ENCODE measurements at regions of chrX and their contacts with region 1.

Region 1: DNA sequence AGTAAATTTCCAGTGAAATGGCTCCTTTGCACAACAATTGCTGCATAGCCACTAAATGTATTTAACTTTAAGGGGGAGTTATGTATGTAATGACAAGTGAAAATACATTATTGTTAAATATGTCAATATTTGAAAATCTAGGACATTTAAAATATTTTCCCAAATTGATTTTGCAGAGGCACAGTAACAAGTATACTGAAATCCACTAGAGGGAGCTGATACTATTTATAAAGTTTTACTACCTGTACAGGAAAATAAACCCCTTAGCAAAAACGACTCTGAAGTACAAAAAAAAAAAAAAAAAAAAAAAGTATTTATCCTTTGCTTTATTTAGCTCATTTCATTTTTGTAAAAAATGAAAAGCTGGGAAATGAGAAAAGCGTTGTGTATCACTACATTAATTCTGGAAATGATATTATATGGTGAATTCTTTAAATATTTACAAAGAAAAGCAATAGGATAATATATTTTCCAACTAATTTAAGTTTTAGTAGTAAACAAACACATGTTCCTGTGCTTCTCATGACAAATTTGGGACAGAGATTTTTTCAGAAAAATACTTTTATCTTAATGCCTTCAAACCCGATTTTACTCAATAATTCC is 727.7 kb downstream of the DMD start:
- DNase-seq: no peak
- H3K4me3 ChIP-seq: no peak overlapping the region
- H3K4me3 Mint-ChIP-seq: no peak overlapping the region
- H3K27ac Mint-ChIP-seq: no peak overlapping the region
- H3K4me1 ChIP-seq: no peaks in the 10 kb centered on the region
- H3K4me1 Mint-ChIP-seq: no peaks in the 10 kb centered on the region
- H3K27me3 ChIP-seq: no peaks in the 10 kb centered on the region
- H3K27me3 Mint-ChIP-seq: no peaks in the 10 kb centered on the region
- CTCF ChIP-seq: peak; percentile 19 to 20

Region 2: GRCh38 chrX:32276153-32276552 is 207.5 kb before region 1 on chrX:
- CTCF ChIA-PET with region 1: no interaction called
- POLR2A ChIA-PET with region 1: no interaction called
- intact Hi-C with region 1: no loop called
- DNase-seq: no peak
- H3K4me3 ChIP-seq: no peak overlapping the region
- H3K4me3 Mint-ChIP-seq: no peak overlapping the region
- H3K27ac Mint-ChIP-seq: no peak overlapping the region
- H3K4me1 ChIP-seq: no peaks in the 10 kb centered on the region
- H3K4me1 Mint-ChIP-seq: no peaks in the 10 kb centered on the region
- H3K27me3 ChIP-seq: no peaks in the 10 kb centered on the region
- H3K27me3 Mint-ChIP-seq: peaks cover 4% of the 10 kb centered on the region
- CTCF ChIP-seq: no peak

Region 3: DNA sequence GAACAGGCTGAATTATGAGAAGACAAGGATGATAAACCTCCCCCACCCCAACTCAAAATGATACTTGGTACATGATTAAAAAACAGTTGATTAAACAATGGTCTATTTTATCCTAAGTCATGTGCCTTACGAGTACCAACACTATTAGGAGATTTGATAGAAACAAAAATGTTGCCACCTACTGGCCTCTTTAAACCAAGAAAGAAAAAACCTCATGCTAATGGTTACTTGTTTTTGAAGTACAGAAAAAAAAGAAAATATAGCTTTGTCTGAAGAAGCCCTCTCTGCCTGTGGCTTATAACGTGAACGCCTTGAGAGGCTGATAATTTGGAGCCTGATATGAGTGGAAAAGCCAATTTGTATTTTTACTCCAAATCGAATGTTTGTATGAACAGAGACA is 189.6 kb after region 1 on chrX:
- CTCF ChIA-PET with region 1: no interaction called
- POLR2A ChIA-PET with region 1: no interaction called
- intact Hi-C with region 1: loop called (anchors 1 kb)
- DNase-seq: peak in 1 of 2 experiments; percentile 13
- H3K4me3 ChIP-seq: no peak overlapping the region
- H3K4me3 Mint-ChIP-seq: no peak overlapping the region
- H3K27ac Mint-ChIP-seq: no peak overlapping the region
- H3K4me1 ChIP-seq: peaks cover 11% of the 10 kb centered on the region
- H3K4me1 Mint-ChIP-seq: peaks cover 7% of the 10 kb centered on the region
- H3K27me3 ChIP-seq: no peaks in the 10 kb centered on the region
- H3K27me3 Mint-ChIP-seq: no peaks in the 10 kb centered on the region
- CTCF ChIP-seq: no peak

Region 4: GRCh38 chrX:33336783-33337182 is 853.1 kb after region 1 on chrX:
- CTCF ChIA-PET with region 1: no interaction called
- POLR2A ChIA-PET with region 1: no interaction called
- intact Hi-C with region 1: loop called (anchors 2 kb)
- DNase-seq: peak in 1 of 2 experiments; percentile 9
- H3K4me3 ChIP-seq: no peak overlapping the region
- H3K4me3 Mint-ChIP-seq: no peak overlapping the region
- H3K27ac Mint-ChIP-seq: no peak overlapping the region
- H3K4me1 ChIP-seq: no peaks in the 10 kb centered on the region
- H3K4me1 Mint-ChIP-seq: no peaks in the 10 kb centered on the region
- H3K27me3 ChIP-seq: no peaks in the 10 kb centered on the region
- H3K27me3 Mint-ChIP-seq: peaks cover 3% of the 10 kb centered on the region
- CTCF ChIP-seq: peak; percentile 37 to 49

Measured in Caco-2 (cell line).